Right lobe of liver (tissue), 6 donors: ENCODE measurements at regions of chr1 and their contacts with region 1.

Region 1: DNA sequence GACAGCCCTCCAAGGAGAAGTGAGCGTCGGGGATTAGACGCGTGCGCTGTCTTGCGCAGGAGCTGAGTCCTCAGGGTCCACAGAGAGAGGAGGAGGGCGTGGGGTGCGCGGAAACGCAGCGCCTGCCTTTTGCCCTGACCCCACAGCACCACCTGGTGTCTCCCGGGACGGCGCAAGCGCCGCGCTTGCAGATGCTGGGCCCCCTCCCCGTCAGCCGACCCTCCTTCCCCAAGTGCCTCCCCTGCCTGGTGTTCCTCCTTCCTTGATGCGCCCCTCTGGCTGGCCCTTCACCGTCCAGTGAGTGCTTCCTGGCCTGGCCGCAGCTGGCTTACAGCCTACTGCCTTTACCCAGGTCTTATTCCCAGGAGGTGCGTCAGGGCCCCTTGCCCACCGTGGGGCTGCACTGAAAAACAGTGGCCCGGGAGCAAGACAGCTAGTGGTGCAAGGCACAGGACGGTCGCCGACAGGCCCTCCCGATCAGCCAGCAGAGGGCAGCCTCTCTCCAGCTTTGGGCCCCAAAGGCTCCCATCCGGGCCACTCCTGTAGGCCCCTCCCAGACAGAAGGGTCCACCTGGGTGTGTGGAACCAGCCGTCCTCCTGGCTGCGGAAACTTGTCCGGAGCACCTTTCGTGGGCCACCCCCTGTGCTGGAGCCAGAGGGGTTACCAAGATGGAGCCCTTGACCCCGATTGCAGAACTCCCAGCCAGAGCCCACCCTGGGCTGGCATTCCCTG is 12.9 kb upstream of the PHLDA3 start:
- DNase-seq: peak; percentile 86 to 89 (median 87)
- ATAC-seq: peak; percentile 82 to 89 (median 89)
- H3K4me3 ChIP-seq: peak overlapping the region in 1 of 3 donors; percentile 7
- H3K27ac ChIP-seq: no peak overlapping the region
- H3K4me1 ChIP-seq: peaks cover 0 to 23% (median 9%) of the 10 kb centered on the region in 4 donors
- H3K27me3 ChIP-seq: no peaks in the 10 kb centered on the region
- CTCF ChIP-seq: peak; percentile 89 to 96 (median 96)
- POLR2A ChIP-seq: peak; percentile 9

Region 2: GRCh38 chr1:201515895-201516294 is 34.0 kb after region 1 on chr1:
- intact Hi-C with region 1: loop called in 1 of 2 experiments (anchors 5 kb)
- DNase-seq: no peak
- ATAC-seq: no peak
- H3K4me3 ChIP-seq: no peak overlapping the region
- H3K27ac ChIP-seq: no peak overlapping the region
- H3K4me1 ChIP-seq: peaks cover 0 to 11% (median 4%) of the 10 kb centered on the region in 4 donors
- H3K27me3 ChIP-seq: no peaks in the 10 kb centered on the region
- CTCF ChIP-seq: no peak
- POLR2A ChIP-seq: no peak